ENCODE measurements at regions of chr3 and their contacts with region 1.

Region 1: GRCh38 chr3:63961891-63962290 is 49.7 kb upstream of the SCAANT1 start:
- DNase-seq: no peak
- H3K4me3 ChIP-seq: no peak overlapping the region
- H3K27ac ChIP-seq: no peak overlapping the region
- H3K27me3 ChIP-seq: no peaks in the 10 kb centered on the region
- CTCF ChIP-seq: peak; percentile 76

Region 2: GRCh38 chr3:63951492-63952247 is 10.2 kb before region 1 on chr3:
- CTCF ChIA-PET with region 1: interaction called, 30 read pairs
- POLR2A ChIA-PET with region 1: no interaction called
- DNase-seq: no peak
- H3K4me3 ChIP-seq: no peak overlapping the region
- H3K27ac ChIP-seq: no peak overlapping the region
- H3K27me3 ChIP-seq: no peaks in the 10 kb centered on the region
- CTCF ChIP-seq: no peak

Region 3: GRCh38 chr3:63975723-63976122 is 13.8 kb after region 1 on chr3:
- CTCF ChIA-PET with region 1: interaction called, 75 read pairs
- POLR2A ChIA-PET with region 1: interaction called, 9 read pairs
- DNase-seq: no peak
- H3K4me3 ChIP-seq: no peak overlapping the region
- H3K27ac ChIP-seq: no peak overlapping the region
- H3K27me3 ChIP-seq: no peaks in the 10 kb centered on the region
- CTCF ChIP-seq: no peak

Region 4: DNA sequence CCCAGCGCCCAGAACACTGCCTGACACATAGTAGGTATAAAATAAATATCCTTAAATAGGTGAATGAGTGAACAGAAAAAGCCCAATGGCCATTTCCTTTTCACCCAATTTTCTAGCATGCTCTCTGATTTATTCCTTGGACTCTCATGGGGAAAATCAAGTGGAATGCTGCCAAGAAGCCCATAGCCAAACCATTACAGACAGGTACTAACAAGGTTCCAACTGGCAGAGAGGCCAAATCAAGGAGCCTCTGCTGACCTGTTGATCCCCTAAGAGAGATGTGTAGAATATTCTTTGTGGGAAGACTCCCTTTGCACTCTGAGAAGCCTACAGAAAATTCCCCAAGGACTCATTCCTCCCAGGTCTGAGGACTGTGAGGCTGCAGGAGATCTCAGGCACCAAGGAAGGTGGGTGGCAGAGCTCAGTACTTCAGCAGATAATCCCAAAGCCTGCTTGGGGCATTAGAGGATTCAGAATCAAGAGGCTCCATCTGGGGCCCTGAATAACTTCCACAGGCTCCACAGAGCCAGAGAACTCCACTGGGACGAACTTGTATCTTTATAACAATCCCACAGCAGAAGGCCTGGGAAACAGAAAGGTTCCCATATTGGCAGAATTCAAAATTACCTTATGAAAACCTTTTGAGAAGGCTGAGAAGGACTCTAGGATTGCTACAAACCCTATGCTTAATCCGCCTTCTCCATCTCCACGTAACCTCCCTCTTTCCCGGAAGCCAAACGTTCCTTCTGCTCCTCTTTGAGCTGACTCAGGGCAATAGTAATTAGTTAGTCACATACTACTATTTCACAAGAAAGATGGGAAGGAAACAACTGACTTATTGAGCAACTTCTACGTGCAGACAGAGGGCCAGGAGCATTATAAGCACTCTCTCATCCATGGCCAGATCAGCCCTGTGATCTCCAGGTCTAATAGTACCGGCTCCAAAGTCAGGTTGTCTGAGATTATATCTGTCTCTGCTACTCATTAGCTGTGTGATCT is 228.9 kb after region 1 on chr3:
- CTCF ChIA-PET with region 1: no interaction called
- POLR2A ChIA-PET with region 1: no interaction called
- DNase-seq: peak; percentile 65
- H3K4me3 ChIP-seq: no peak overlapping the region
- H3K27ac ChIP-seq: peak overlapping the region; percentile 71
- H3K27me3 ChIP-seq: no peaks in the 10 kb centered on the region
- CTCF ChIP-seq: no peak